Tibial artery (tissue), 4 donors: ENCODE measurements at regions of chr5 and their contacts with region 1.

Region 1: DNA sequence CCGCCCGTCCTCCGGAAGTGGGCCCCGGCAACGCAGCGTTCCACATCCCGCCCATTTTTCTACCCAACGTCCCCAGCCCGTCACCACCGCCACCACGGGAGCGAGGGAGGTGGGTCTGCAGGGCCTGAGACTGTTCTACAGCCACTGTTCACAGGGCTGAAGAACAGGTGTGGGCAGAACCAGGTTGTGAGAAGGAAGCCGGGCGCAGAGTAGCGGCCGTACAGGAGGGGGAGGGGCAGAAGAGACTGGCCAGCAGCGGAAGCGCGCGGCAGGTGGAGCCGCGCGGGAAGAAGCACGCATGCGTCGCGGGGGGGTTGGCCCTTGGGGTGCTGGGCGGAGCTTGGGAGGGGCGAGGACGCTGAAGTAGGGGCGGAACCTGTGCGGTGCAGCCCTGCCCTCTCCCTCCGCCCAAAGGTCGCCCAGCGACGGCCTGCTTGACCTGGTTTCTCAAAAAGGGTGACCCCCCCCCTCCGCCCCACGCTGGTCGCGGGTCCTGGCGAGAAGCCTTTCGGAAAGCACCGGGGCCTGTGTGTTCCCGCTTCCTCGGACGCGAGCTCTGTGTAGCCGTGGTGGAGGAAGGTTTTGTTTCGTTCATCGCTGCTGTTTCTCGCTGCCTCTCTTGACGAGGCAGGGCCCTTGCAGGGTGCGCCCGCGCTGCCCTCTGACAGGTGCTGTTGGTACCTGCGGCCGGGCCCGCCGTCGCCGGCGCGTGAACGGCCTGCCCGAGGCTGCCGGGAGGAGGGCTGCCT is 7.8 kb upstream of the MGAT1 start:
- DNase-seq: peak; percentile 95 to 98
- H3K4me3 ChIP-seq: peak overlapping the region; percentile 59 to 85
- H3K27ac ChIP-seq: peak overlapping the region; percentile 92 to 96
- H3K4me1 ChIP-seq: peaks cover 0 to 48% (median 38%) of the 10 kb centered on the region in 4 donors
- H3K27me3 ChIP-seq: no peaks in the 10 kb centered on the region
- CTCF ChIP-seq: no peak

Region 2: GRCh38 chr5:179559284-179560252 is 1250.8 kb before region 1 on chr5:
- intact Hi-C with region 1: loop called (anchors 10 kb)
- DNase-seq: peak; percentile 98 to 99
- H3K4me3 ChIP-seq: peak overlapping the region; percentile 59 to 64
- H3K27ac ChIP-seq: peak overlapping the region; percentile 73 to 85
- H3K4me1 ChIP-seq: peaks cover 0 to 18% (median 11%) of the 10 kb centered on the region in 4 donors
- H3K27me3 ChIP-seq: no peaks in the 10 kb centered on the region
- CTCF ChIP-seq: no peak

Region 3: DNA sequence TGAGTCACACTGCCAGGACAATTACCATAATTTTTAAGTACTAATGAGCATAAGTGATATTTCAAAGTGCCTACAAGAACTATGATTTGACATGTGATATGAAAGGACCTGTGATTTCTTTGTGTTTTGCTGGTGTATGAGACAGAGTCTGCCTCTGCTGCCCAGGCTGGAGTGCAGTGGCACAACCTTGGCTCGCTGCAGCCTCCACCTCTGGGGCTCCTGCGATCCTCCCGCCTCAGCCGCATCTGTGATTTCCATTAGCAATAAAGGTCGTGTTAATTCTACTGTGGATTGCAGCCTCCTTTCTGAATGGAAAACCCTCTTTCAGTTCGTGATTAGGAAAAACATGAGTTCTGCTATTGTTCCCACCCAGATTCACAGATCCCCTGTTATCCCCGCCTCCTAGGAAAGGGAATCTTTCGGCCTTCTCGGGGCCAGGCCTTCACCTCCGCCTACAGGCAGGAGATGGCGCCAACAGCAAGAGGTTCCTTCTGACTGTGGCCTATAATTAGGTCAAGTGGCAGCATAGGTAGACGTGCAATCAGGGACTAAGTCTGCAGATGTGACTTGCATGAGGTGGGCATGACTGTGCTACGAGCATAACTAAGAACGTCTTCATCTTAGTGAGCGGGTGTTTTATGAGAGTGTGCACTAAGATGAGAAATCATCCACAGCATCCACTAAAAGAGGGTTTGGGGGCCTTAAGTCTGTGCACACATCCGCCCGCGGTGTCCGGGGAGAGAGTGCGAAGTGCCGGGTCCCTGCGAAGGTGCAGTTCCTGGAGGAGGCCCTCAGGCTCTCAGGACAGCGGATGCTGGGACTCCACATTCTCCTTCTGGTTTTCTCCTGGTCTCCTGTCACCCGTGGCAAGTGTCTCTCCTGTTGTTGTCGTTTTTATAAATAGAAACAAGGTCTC is 371.5 kb after region 1 on chr5:
- intact Hi-C with region 1: loop called (anchors 10 kb)
- DNase-seq: peak in 1 of 2 donors; percentile 58
- H3K4me3 ChIP-seq: no peak overlapping the region
- H3K27ac ChIP-seq: no peak overlapping the region
- H3K4me1 ChIP-seq: peaks cover 0 to 16% (median 12%) of the 10 kb centered on the region in 4 donors
- H3K27me3 ChIP-seq: peaks cover 0 to 3% of the 10 kb centered on the region in 2 donors
- CTCF ChIP-seq: peak; percentile 76 to 78

Region 4: GRCh38 chr5:181246276-181247050 is 436.1 kb after region 1 on chr5:
- intact Hi-C with region 1: loop called (anchors 5 kb)
- DNase-seq: peak; percentile 87 to 97
- H3K4me3 ChIP-seq: peak overlapping the region; percentile 86 to 92
- H3K27ac ChIP-seq: peak overlapping the region; percentile 94 to 96
- H3K4me1 ChIP-seq: peaks cover 0 to 74% (median 62%) of the 10 kb centered on the region in 4 donors
- H3K27me3 ChIP-seq: no peaks in the 10 kb centered on the region
- CTCF ChIP-seq: no peak